Calu3 (cell line): ENCODE measurements at regions of chr16 and their contacts with region 1.

Region 1: GRCh38 chr16:57270221-57271062 is 14.0 kb downstream of the PLLP start:
- DNase-seq: no peak
- H3K4me3 Mint-ChIP-seq: no peak overlapping the region
- H3K27ac Mint-ChIP-seq: no peak overlapping the region
- H3K4me1 Mint-ChIP-seq: peaks cover 44% of the 10 kb centered on the region
- H3K27me3 Mint-ChIP-seq: no peaks in the 10 kb centered on the region
- CTCF ChIP-seq: no peak

Region 2: GRCh38 chr16:57019746-57020145 is 250.7 kb before region 1 on chr16:
- CTCF ChIA-PET with region 1: interaction called, 12 read pairs
- intact Hi-C with region 1: no loop called
- DNase-seq: no peak
- H3K4me3 Mint-ChIP-seq: no peak overlapping the region
- H3K27ac Mint-ChIP-seq: no peak overlapping the region
- H3K4me1 Mint-ChIP-seq: no peaks in the 10 kb centered on the region
- H3K27me3 Mint-ChIP-seq: peaks cover 46% of the 10 kb centered on the region
- CTCF ChIP-seq: no peak

Region 3: GRCh38 chr16:57358527-57359095 is 88.2 kb after region 1 on chr16 and contains the start of gene CCL22:
- CTCF ChIA-PET with region 1: no interaction called
- intact Hi-C with region 1: no loop called
- DNase-seq: no peak
- H3K4me3 Mint-ChIP-seq: no peak within 1 kb of the TSS
- H3K27ac Mint-ChIP-seq: peak within 1 kb of the TSS; percentile 6
- H3K4me1 Mint-ChIP-seq: peaks cover 32% of the 10 kb centered on the region
- H3K27me3 Mint-ChIP-seq: no peaks in the 10 kb centered on the region
- CTCF ChIP-seq: no peak
- total RNA-seq, gene CCL22: 2.6 and 4.5 TPM in 2 replicates